ENCODE measurements at regions of chr9 and their contacts with region 1.

Region 1: DNA sequence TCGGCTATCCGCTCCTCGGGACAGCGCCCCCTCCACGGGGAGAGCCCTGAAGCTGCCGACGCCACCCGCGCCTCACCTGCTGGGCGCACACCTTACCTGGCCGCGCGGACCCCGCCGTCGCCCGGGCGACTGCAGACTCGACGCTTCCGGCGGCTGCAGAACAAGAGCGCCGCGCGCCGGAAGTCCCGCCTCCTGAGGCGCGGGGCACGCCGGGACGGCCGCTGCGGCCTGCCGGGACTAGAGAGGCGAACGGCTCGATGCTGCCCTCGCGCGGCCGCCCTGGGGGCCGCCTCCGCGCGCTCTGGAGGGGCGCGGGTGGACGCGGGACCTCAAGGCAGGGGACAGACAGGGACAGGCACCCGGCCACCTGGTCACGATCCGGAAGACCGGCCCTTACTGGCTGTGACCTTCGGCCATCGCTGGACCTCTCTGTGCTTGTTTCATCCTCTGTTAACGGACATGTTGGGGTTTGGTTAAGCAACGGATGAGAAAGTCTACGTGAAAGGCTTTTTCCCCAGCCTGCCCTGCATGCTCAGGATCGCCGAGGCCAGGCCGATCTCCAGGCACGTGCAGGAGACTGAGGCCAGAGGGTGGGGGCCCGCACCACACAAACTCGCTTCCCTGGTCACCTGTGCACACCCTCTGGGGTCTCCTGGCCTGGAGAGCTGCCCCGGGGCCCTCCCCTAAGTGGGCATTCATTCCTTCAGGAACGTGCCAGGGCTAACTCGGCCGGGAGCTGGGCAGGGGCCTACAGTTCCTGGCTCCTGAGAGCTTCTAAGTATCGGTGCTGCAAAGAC is at the start of gene SNAPC4:
- DNase-seq: peak; percentile 74 to 88 (median 83)
- H3K4me3 ChIP-seq: peak within 1 kb of the TSS; percentile 36 to 99 (median 82)
- H3K27ac ChIP-seq: peak within 1 kb of the TSS in 1 of 5 donors; percentile 54
- H3K4me1 ChIP-seq: peaks cover 9 to 17% of the 10 kb centered on the region in 2 donors
- H3K27me3 ChIP-seq: no peaks in the 10 kb centered on the region
- CTCF ChIP-seq: peak; percentile 54 to 96 (median 80)
- POLR2A ChIP-seq: no peak
- total RNA-seq, gene SNAPC4: 2.4 to 10.6 (median 5.5) TPM

Region 2: GRCh38 chr9:136267261-136268111 is 132.8 kb before region 1 on chr9:
- intact Hi-C with region 1: no loop called
- DNase-seq: peak; percentile 86 to 92 (median 89)
- H3K4me3 ChIP-seq: peak overlapping the region in 2 of 4 donors; percentile 27 to 46
- H3K27ac ChIP-seq: peak overlapping the region in 1 of 5 donors; percentile 6
- H3K4me1 ChIP-seq: peaks cover 0 to 4% of the 10 kb centered on the region in 2 donors
- H3K27me3 ChIP-seq: no peaks in the 10 kb centered on the region
- CTCF ChIP-seq: peak in 4 of 6 experiments; percentile 21 to 28 (median 26)
- POLR2A ChIP-seq: peak; percentile 13 to 54

Region 3: DNA sequence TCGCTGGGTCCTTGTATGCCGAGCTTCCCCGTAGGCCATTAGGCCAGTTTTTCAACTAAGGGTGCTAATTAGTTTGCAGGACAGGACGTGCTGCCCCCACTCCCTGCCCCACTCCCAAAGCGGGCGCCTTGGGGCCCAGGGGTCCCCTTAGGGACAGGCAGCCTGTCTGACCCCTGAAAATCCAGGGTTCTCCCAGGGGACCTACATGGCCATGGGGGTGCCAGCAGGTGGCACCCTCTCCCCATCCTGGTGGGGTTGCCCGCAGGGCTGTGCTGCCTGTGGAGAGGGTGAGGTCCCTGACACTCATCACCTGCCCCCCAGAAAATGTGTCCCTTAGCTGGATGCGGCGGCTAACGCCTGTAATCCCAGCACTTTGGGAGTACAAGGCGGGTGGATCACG is 87.8 kb before region 1 on chr9:
- intact Hi-C with region 1: loop called in 1 of 2 experiments (anchors 2 kb)
- DNase-seq: peak in 6 of 7 donors; percentile 44 to 71 (median 56)
- H3K4me3 ChIP-seq: no peak overlapping the region
- H3K27ac ChIP-seq: no peak overlapping the region
- H3K4me1 ChIP-seq: peaks cover 7% of the 10 kb centered on the region in 2 donors
- H3K27me3 ChIP-seq: no peaks in the 10 kb centered on the region
- CTCF ChIP-seq: peak; percentile 35 to 75 (median 67)
- POLR2A ChIP-seq: no peak

Region 4: DNA sequence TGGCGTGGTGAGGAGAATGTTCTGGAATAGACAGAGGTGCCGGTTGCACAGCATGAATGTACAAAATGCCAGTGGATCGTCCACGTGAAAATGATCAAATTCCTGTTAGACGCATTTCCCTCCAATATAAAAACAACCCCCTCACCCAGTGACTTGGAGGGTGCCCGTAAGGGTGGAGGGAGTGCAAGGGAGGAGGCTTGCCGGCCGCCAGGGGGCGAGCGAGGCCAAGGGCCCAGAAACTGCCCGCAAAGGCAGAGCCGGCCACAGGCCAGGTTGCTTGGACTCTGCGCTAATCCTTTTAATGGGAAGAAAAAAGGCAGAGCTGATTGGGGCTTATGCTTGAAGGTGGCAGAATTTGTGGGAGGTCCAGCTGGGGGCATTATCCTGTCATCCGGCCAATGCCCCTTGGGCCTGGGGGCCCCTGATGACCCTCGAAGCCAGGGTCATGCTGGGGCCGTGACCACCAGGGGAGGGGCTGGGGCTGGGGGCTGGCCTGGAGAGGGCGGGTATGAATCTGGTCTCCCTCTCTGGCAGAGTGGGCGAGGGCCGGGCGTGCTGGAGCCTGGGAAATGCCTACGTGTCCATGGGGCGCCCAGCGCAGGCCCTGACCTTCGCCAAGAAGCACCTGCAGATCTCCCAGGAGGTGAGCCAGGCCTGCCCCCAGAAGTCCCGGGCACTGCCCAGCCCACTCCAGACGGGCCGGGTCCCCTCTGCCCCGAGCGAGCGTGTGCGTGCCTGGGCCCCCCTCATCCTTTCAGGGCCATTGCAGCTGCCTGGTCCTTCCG is 60.9 kb before region 1 on chr9:
- intact Hi-C with region 1: loop called (anchors 5 kb)
- DNase-seq: peak; percentile 72 to 87 (median 81)
- H3K4me3 ChIP-seq: no peak overlapping the region
- H3K27ac ChIP-seq: no peak overlapping the region
- H3K4me1 ChIP-seq: peaks cover 16 to 28% of the 10 kb centered on the region in 2 donors
- H3K27me3 ChIP-seq: no peaks in the 10 kb centered on the region
- CTCF ChIP-seq: peak; percentile 84 to 96 (median 88)
- POLR2A ChIP-seq: no peak

Measured in adrenal gland (tissue), 19 donors.